Left ventricle myocardium inferior (tissue), 1 donor: ENCODE measurements at regions of chr17 and their contacts with region 1.

Region 1: GRCh38 chr17:82351716-82352488 is 7.1 kb upstream of the TEX19 start:
- DNase-seq: peak; percentile 79
- H3K4me3 ChIP-seq: no peak overlapping the region
- H3K27ac ChIP-seq: no peak overlapping the region
- H3K4me1 ChIP-seq: peaks cover 6% of the 10 kb centered on the region
- H3K27me3 ChIP-seq: peaks cover 28% of the 10 kb centered on the region
- CTCF ChIP-seq: peak; percentile 97

Region 2: DNA sequence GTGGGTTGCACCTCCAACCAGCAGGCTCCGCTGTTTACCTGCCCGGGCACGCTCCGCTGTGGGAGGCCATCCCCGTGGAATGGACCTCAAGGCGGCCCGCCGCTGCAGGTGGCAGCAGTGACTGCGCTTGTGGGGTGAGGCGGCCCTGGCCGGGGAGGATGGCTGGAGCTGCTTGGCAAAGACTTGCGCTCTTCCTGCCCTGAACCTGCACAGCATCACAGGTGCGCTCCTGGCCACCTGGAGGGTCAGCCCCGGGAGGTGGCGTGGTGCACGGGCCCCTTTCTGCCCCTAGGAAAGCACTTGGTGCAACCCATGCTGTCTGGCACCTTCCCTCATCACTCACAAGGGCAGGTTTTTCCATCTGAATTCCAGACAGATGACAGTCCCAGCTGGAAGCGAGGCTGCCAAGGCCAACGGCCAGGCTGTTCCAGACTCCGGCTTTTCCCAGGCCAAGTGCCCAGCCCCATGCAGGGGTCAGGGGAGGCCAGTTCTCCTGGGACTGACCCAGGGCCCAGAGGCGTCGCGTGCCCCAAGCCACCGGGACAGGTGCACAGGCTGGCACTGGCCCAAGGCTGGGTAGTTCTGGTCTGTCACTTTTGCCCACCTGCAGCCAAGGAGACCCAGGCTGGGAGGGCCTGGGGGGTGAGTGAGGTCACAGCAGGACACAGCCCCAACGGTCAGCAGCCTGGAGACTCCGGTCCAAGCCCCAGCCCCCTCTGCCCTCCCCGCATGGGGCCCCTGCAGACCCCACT is 33.0 kb after region 1 on chr17:
- intact Hi-C with region 1: no loop called
- DNase-seq: peak; percentile 79
- H3K4me3 ChIP-seq: no peak overlapping the region
- H3K27ac ChIP-seq: peak overlapping the region; percentile 77
- H3K4me1 ChIP-seq: peaks cover 41% of the 10 kb centered on the region
- H3K27me3 ChIP-seq: peaks cover 54% of the 10 kb centered on the region
- CTCF ChIP-seq: no peak

Region 3: GRCh38 chr17:82414548-82415281 is 62.8 kb after region 1 on chr17:
- intact Hi-C with region 1: loop called (anchors 5 kb)
- DNase-seq: peak; percentile 76
- H3K4me3 ChIP-seq: peak overlapping the region; percentile 17
- H3K27ac ChIP-seq: no peak overlapping the region
- H3K4me1 ChIP-seq: peaks cover 37% of the 10 kb centered on the region
- H3K27me3 ChIP-seq: no peaks in the 10 kb centered on the region
- CTCF ChIP-seq: peak; percentile 77

Region 4: DNA sequence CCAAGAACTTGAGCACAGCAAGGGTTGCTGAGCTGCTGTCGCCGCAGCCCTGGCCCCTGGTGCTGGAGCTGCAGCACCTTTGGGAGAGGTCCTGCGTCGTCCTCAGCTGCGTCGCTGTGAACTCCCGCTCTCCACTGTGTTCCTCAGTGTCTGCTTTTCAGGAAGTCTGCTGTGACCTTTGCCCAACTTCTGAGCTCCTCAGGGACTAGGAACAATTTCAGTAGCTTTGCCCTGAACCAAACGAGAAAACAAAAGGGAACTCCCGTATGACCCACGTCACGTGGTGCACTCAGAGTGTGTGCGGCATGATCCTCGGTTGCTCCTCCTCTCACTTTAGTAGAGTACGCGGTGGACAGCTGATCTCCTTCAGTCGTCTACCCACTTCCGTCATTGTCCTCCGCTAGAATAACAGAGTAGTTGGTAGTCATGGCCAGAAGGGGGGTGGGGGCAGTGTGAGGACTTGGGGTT is 252.1 kb after region 1 on chr17:
- intact Hi-C with region 1: no loop called
- DNase-seq: peak; percentile 56
- H3K4me3 ChIP-seq: peak overlapping the region; percentile 45
- H3K27ac ChIP-seq: peak overlapping the region; percentile 66
- H3K4me1 ChIP-seq: peaks cover 53% of the 10 kb centered on the region
- H3K27me3 ChIP-seq: no peaks in the 10 kb centered on the region
- CTCF ChIP-seq: no peak